BJ (cell line): ENCODE measurements at regions of chr4 and their contacts with region 1.

Region 1: DNA sequence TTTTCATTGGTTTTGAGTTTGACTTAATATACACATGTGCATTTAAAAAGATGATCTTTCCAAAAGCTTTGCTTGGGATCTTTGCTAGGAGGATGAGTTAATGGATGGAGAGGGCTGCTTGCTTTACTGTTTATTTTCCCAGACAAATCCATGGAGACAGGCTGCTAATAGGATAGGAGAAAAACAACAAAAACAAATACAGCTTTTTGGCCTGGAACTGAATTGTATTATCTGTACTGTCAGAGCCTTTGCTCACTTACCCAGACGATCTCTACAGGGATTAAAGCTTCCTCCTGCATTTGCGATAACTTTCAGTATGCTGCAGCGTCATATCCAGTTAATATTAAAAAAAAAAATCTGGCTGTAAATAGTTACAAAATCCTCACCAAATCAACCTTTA is 190.8 kb upstream of the NUDT6 start:
- DNase-seq: no peak
- H3K4me3 ChIP-seq: no peak overlapping the region
- H3K27me3 ChIP-seq: no peaks in the 10 kb centered on the region
- CTCF ChIP-seq: no peak

Region 2: DNA sequence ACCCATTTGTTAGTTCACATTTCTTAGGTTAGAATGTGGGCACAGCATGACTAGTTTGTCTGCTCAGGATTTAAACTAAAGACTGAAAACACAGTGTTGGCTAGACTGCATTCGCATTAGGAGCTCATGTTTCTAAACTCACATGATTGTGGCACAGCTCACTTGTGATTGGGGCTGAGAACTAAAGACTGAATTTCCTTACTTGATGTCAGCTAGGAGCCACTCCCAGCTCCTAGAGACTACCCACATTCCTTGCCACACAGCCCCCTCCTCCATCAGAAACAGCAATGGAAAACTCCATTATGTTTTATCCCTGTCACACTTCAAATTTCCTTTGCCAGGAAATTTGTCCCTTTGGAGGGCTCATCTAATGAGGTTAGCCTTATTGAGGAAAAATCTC is 20.6 kb before region 1 on chr4:
- CTCF ChIA-PET with region 1: no interaction called
- POLR2A ChIA-PET with region 1: no interaction called
- DNase-seq: no peak
- H3K4me3 ChIP-seq: no peak overlapping the region
- H3K27me3 ChIP-seq: no peaks in the 10 kb centered on the region
- CTCF ChIP-seq: no peak

Region 3: DNA sequence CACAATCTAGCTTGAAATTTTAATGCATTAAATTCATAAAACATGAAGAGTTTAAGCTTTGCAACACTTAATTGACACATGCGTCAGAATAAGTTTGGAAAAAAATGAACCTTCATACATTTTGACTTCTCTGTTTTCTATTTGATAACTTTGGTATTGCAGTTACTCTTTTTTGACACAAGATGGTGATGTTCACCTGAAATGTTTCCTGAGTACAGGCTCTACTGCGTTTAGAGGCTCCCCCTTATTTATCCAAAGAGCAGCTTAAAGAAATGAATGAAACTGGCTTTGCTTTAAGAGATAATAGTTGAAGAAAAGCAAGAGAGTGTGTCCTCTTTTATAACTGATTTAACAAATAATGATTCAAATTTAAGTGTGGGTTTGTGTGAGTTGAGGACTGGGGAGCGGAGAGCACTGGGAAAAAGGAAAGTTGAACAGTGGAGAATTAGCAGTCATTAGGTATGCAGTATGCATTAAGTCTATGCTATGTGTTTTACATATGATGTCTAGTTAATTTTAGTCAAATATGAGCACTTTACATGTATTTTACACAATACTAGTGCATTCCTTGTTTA is 10.2 kb before region 1 on chr4:
- CTCF ChIA-PET with region 1: interaction called, 10 read pairs
- POLR2A ChIA-PET with region 1: no interaction called
- DNase-seq: no peak
- H3K4me3 ChIP-seq: no peak overlapping the region
- H3K27me3 ChIP-seq: no peaks in the 10 kb centered on the region
- CTCF ChIP-seq: peak; percentile 68